Left ventricle myocardium inferior (tissue), 1 donor: ENCODE measurements at regions of chr11 and their contacts with region 1.

Region 1: GRCh38 chr11:14544611-14545010 is 24.4 kb upstream of the PSMA1 start:
- DNase-seq: no peak
- H3K4me3 ChIP-seq: no peak overlapping the region
- H3K27ac ChIP-seq: no peak overlapping the region
- H3K4me1 ChIP-seq: peaks cover 27% of the 10 kb centered on the region
- H3K27me3 ChIP-seq: no peaks in the 10 kb centered on the region
- CTCF ChIP-seq: no peak

Region 2: DNA sequence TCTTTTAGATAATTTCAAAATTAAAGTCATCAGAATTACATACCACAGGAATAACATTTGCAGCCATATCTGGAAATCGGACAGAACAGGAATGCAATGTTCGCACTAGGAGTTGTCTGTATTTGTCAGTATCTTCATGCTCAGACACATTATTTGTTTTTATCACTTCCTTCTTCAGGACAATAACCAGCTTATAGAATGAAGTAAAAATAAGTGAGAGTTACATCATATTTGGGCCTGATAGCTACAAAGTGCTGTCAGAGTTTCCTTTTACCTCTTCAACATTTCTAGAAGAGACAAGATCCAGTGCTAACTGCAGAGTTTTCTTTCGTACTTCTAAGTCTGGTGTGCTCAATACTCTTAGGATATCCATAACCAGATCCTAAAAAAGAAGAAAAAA is 63.9 kb before region 1 on chr11:
- intact Hi-C with region 1: no loop called
- DNase-seq: no peak
- H3K4me3 ChIP-seq: no peak overlapping the region
- H3K27ac ChIP-seq: no peak overlapping the region
- H3K4me1 ChIP-seq: no peaks in the 10 kb centered on the region
- H3K27me3 ChIP-seq: no peaks in the 10 kb centered on the region
- CTCF ChIP-seq: no peak

Region 3: DNA sequence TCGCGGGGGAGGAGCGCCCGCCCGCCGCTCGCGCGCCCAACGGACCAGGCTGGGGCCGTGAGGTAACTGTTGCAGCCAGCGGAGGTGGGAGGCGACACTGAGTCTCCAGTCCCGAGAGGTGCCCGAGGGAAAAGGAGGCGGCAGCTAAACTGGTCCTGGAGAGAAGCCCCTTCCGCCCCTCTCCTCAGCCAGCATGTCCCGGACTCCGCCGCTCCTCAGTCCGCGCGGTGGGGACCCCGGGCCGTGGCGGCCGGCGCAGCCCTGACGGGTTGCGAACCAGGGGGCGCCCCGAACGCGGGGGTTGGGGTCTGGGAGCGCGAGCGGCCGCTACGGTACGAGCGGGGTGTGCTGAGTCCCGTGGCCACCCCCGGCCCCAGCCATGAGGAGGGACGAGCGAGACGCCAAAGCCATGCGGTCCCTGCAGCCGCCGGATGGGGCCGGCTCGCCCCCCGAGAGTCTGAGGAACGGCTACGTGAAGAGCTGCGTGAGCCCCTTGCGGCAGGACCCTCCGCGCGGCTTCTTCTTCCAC is 99.2 kb after region 1 on chr11 and contains the start of gene PDE3B:
- intact Hi-C with region 1: loop called (anchors 5 kb)
- DNase-seq: peak; percentile 84
- H3K4me3 ChIP-seq: peak within 1 kb of the TSS; percentile 91
- H3K27ac ChIP-seq: peak within 1 kb of the TSS; percentile 88
- H3K4me1 ChIP-seq: peaks cover 43% of the 10 kb centered on the region
- H3K27me3 ChIP-seq: no peaks in the 10 kb centered on the region
- CTCF ChIP-seq: no peak
- total RNA-seq, gene PDE3B: 5.9 TPM

Region 4: GRCh38 chr11:14904745-14905103 is 360.1 kb after region 1 on chr11:
- intact Hi-C with region 1: loop called (anchors 5 kb)
- DNase-seq: peak; percentile 87
- H3K4me3 ChIP-seq: peak overlapping the region; percentile 73
- H3K27ac ChIP-seq: no peak overlapping the region
- H3K4me1 ChIP-seq: peaks cover 16% of the 10 kb centered on the region
- H3K27me3 ChIP-seq: no peaks in the 10 kb centered on the region
- CTCF ChIP-seq: peak; percentile 90